ENCODE measurements at regions of chrX and their contacts with region 1.

Region 1: GRCh38 chrX:120144178-120144844 is 14.1 kb upstream of the RHOXF2 start:
- DNase-seq: no peak
- ATAC-seq: no peak
- H3K4me3 ChIP-seq: no peak overlapping the region
- H3K27ac ChIP-seq: no peak overlapping the region
- H3K4me1 ChIP-seq: no peaks in the 10 kb centered on the region
- H3K27me3 ChIP-seq: peaks cover 2% of the 10 kb centered on the region
- CTCF ChIP-seq: no peak
- POLR2A ChIP-seq: no peak
- RAD21 ChIP-seq: no peak

Region 2: DNA sequence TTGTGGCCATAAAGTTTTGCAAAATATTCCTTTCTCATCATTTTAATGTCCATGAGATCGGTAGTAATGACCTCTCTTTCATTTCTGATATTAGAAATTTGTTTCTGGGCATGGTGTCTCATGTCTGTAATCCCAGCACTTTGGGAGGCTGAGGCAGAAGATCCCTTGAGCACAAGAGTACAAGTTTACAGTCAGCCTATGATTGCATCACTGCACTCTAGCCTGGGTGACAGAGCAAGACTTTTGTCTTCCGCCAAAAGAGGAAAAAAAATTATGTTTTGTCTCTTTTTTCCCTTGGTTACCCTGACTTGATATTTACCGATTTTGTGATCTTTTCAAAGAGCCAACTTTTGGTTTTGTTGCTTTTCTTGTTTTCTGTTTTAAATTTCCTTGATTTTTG is 189.9 kb before region 1 on chrX:
- CTCF ChIA-PET with region 1: no interaction called
- POLR2A ChIA-PET with region 1: no interaction called
- dilution Hi-C with region 1: no loop called
- in situ Hi-C with region 1: loop called (anchors 25 kb)
- intact Hi-C with region 1: no loop called
- DNase-seq: no peak
- ATAC-seq: no peak
- H3K4me3 ChIP-seq: no peak overlapping the region
- H3K27ac ChIP-seq: no peak overlapping the region
- H3K4me1 ChIP-seq: no peaks in the 10 kb centered on the region
- H3K27me3 ChIP-seq: no peaks in the 10 kb centered on the region
- CTCF ChIP-seq: no peak
- POLR2A ChIP-seq: no peak
- RAD21 ChIP-seq: no peak

Region 3: DNA sequence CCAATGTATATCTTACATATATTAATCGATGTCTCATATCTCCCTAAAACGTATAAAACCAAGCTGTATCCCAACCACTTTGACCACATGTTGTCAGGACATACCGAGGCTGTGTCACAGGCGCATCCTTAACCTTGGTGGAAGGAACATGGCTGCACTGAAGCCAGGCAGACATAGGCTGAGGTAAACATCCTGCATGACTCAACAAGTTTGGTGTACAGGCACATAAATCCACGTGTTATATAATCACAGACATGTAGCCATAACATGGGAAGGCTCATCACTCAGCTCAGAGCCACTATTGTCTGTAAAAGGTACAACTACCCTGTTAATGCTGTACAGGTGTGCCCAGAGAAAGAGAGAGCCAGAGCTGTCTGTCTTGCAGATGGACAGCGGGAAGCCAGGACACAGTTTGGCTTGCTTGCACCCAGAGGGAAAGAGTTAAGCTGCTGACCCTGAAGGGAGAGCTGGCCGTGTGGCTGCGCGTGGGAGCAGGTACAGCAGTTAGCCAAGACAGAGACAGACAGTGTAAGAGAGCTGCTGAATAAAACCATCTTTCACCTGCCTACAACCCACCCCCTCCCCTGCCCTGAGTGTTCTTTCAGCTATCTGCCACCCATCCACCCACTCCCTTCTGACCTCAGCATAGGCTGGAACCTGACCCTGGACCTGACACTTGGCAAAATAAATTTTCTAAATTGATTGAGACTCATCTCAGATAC is 84.0 kb after region 1 on chrX:
- CTCF ChIA-PET with region 1: no interaction called
- POLR2A ChIA-PET with region 1: no interaction called
- dilution Hi-C with region 1: no loop called
- in situ Hi-C with region 1: no loop called
- intact Hi-C with region 1: no loop called
- DNase-seq: no peak
- ATAC-seq: no peak
- H3K4me3 ChIP-seq: no peak overlapping the region
- H3K27ac ChIP-seq: no peak overlapping the region
- H3K4me1 ChIP-seq: no peaks in the 10 kb centered on the region
- H3K27me3 ChIP-seq: no peaks in the 10 kb centered on the region
- CTCF ChIP-seq: no peak
- POLR2A ChIP-seq: no peak
- RAD21 ChIP-seq: no peak

Region 4: DNA sequence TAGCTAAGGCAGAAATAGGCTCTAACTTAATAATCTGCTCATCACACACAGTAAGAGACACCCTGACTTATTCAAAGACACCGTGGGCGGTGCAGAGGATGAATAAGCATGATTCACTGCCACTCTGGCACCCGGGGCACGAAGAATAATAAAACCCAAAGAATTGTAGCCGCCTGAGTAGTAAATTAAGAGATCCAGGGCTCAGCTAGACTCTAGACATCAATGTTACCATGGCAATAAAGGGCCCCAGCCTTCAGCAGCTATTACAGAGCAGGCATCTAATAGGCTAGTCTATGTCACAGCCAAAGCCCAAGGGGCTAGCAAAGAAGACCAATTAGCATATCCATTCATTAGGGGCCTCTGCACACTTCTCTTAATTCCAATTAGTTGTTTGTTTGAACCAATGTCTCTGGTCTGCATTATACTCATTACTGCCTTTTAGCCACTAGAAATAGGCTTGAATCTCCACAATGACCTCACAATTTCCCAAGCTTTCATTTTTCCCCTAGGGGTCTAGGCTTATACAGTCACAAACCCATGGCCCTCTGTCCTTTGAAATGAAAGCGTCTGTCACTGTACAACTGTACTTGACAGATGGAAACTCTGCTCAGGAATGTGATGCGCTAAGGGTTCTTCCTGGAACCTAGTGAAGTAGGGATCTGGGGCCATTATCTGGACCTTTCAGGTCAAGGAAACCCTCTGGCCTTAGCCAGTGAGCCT is 214.6 kb after region 1 on chrX:
- CTCF ChIA-PET with region 1: no interaction called
- POLR2A ChIA-PET with region 1: no interaction called
- dilution Hi-C with region 1: no loop called
- in situ Hi-C with region 1: no loop called
- intact Hi-C with region 1: no loop called
- DNase-seq: no peak
- ATAC-seq: no peak
- H3K4me3 ChIP-seq: no peak overlapping the region
- H3K27ac ChIP-seq: no peak overlapping the region
- H3K4me1 ChIP-seq: no peaks in the 10 kb centered on the region
- H3K27me3 ChIP-seq: peaks cover 1% of the 10 kb centered on the region; the same call in 1 of the 2 replicates
- CTCF ChIP-seq: no peak
- POLR2A ChIP-seq: no peak
- RAD21 ChIP-seq: no peak